ENCODE measurements at regions of chr2 and their contacts with region 1.

Region 1: DNA sequence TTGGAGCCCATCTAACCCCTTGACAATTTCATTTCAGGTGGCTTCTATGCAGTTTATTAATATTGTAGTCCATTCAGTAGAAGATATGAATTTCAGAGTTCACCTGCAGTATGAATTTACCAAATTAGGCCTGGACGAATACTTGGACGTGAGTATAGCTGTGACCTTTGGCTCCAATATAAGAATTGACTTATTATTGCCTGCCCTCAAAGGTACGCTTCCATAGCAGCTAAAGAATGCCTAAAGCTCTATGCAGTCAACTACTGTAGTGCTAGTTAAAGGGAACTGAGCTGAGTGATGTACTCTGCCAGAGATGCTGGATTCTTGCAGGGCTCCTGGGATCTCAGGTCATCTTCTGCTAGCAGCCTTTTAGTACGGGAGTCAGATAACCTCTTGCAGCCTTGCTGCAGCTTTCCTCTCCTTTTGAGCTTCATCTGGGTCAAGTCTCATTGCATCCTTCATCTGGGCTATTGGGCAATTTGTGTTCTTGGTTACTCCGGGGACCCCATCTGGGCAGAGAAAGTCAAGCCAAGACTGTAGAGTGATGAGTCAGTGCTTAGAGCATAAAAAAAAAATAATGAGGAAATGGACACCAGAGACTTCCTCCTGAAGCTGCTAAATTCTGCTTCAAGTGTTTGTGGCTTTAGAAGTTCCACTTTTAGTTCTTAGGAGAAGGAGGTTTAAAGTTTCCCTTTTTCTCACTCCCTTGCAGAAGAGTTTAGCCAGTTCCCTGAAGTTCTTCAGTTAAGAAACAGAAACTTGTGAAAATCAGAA is 105.6 kb downstream of the PRPF40A start:
- DNase-seq: peak; percentile 64
- ATAC-seq: peak; percentile 88
- H3K4me3 ChIP-seq: peak overlapping the region; percentile 49; the same call in 1 of the 2 replicates
- H3K27ac ChIP-seq: peak overlapping the region; percentile 64
- H3K4me1 ChIP-seq: peaks cover 20% of the 10 kb centered on the region
- H3K27me3 ChIP-seq: no peaks in the 10 kb centered on the region
- CTCF ChIP-seq: no peak
- EP300 ChIP-seq: peak in 1 of 2 experiments; percentile 71; a peak in 2 of 4 replicates
- POLR2A ChIP-seq: no peak
- RAD21 ChIP-seq: no peak

Region 2: DNA sequence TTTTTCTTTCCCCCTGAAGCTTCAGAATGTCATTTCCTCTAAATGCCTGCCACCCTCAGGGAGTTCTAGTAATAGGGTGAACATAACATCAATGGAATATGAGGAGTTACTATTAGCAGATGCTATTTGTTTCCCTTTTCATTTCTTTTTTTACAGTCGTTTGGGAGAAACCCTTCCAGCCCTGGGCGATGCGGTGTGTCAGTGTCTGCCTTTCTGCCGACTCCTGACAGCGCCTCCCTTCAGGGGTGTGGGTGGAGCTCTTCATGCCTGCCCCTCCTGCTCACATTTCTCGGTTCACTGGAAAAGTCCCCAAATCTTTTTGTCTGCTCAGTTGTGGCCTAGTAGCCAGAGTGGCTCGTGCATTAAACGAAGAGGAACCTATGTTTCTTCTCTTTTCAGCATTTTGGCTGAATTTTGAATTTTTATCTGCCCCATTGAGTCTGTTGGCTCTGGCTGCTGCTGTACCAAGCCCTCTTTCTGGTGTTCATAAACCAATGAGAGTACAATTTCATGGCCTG is 204.4 kb before region 1 on chr2:
- CTCF ChIA-PET with region 1: interaction called, 4 read pairs
- POLR2A ChIA-PET with region 1: interaction called, 4 read pairs
- RAD21 ChIA-PET with region 1: interaction called, 8 read pairs
- SMC1A ChIA-PET with region 1: interaction called, 21 read pairs
- in situ Hi-C with region 1: no loop called
- intact Hi-C with region 1: no loop called
- DNase-seq: peak; percentile 55
- ATAC-seq: peak; percentile 95
- H3K4me3 ChIP-seq: peak overlapping the region; percentile 20; the same call in 1 of the 2 replicates
- H3K27ac ChIP-seq: peak overlapping the region; percentile 77
- H3K4me1 ChIP-seq: peaks cover 18% of the 10 kb centered on the region
- H3K27me3 ChIP-seq: no peaks in the 10 kb centered on the region
- CTCF ChIP-seq: 0 out of 6 replicates have a peak, but pooled peaks of 1 of the 3 experiments have one; percentile 1
- EP300 ChIP-seq: 0 out of 4 replicates have a peak, but pooled peaks of 1 of the 2 experiments have one; percentile 32
- POLR2A ChIP-seq: peak; percentile 50; the same call in 1 of the 2 replicates
- RAD21 ChIP-seq: no peak

Region 3: GRCh38 chr2:152505495-152505906 is 106.1 kb before region 1 on chr2:
- CTCF ChIA-PET with region 1: no interaction called
- POLR2A ChIA-PET with region 1: interaction called, 3 read pairs
- RAD21 ChIA-PET with region 1: interaction called, 6 read pairs
- SMC1A ChIA-PET with region 1: interaction called, 14 read pairs
- in situ Hi-C with region 1: no loop called
- intact Hi-C with region 1: loop called (anchors 5 kb)
- DNase-seq: peak; percentile 35
- ATAC-seq: peak; percentile 89
- H3K4me3 ChIP-seq: no peak overlapping the region
- H3K27ac ChIP-seq: peak overlapping the region; percentile 29; the same call in 1 of the 2 replicates
- H3K4me1 ChIP-seq: peaks cover 11% of the 10 kb centered on the region; the same call in 1 of the 2 replicates
- H3K27me3 ChIP-seq: no peaks in the 10 kb centered on the region; a peak in 1 of 4 replicates
- CTCF ChIP-seq: no peak
- EP300 ChIP-seq: peak in 1 of 2 experiments; percentile 46; a peak in 1 of 4 replicates
- POLR2A ChIP-seq: no peak
- RAD21 ChIP-seq: no peak

Region 4: DNA sequence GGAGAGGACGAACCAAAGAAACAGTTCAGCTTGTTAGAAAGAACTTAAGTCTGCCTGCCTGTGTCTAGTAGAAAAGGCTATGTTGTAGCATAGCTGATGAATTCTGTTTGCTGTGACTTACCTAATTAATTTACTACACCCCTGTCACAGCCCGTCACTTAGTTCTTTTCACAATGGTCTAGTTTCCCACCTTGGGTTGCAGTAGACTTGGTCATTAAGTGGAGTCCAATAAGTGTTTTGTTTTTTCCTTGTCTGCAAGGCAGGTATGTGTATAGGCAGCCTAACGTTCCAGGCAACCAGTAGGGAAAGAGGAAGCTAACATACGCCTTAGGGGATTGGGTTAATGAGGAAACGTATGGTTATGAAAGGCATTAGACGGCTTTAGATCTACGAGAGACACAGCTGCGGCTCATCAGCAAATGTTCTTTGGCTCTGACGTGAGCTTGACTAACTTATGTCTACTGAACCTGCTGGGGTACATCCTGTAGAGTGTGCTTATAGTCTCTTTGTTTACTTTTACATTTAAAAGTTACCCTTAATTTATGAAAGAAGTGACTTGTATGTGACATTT is 74.5 kb before region 1 on chr2:
- CTCF ChIA-PET with region 1: no interaction called
- POLR2A ChIA-PET with region 1: no interaction called
- RAD21 ChIA-PET with region 1: no interaction called
- SMC1A ChIA-PET with region 1: no interaction called
- in situ Hi-C with region 1: no loop called
- intact Hi-C with region 1: no loop called
- DNase-seq: no peak
- ATAC-seq: no peak
- H3K4me3 ChIP-seq: no peak overlapping the region
- H3K27ac ChIP-seq: no peak overlapping the region
- H3K4me1 ChIP-seq: no peaks in the 10 kb centered on the region
- H3K27me3 ChIP-seq: no peaks in the 10 kb centered on the region
- CTCF ChIP-seq: no peak
- EP300 ChIP-seq: no peak
- POLR2A ChIP-seq: no peak
- RAD21 ChIP-seq: no peak

Region 5: GRCh38 chr2:152566728-152567069 is 44.9 kb before region 1 on chr2:
- CTCF ChIA-PET with region 1: interaction called, 7 read pairs
- POLR2A ChIA-PET with region 1: interaction called, 9 read pairs
- RAD21 ChIA-PET with region 1: interaction called, 25 read pairs
- SMC1A ChIA-PET with region 1: interaction called, 30 read pairs
- in situ Hi-C with region 1: no loop called
- intact Hi-C with region 1: loop called (anchors 2 kb)
- DNase-seq: peak; percentile 64
- ATAC-seq: peak; percentile 54
- H3K4me3 ChIP-seq: no peak overlapping the region
- H3K27ac ChIP-seq: peak overlapping the region; percentile 65
- H3K4me1 ChIP-seq: peaks cover 28% of the 10 kb centered on the region
- H3K27me3 ChIP-seq: no peaks in the 10 kb centered on the region
- CTCF ChIP-seq: no peak
- EP300 ChIP-seq: 0 out of 4 replicates have a peak, but pooled peaks of 1 of the 2 experiments have one; percentile 45
- POLR2A ChIP-seq: no peak
- RAD21 ChIP-seq: no peak

Region 6: GRCh38 chr2:152627351-152627957 is 15.8 kb after region 1 on chr2:
- CTCF ChIA-PET with region 1: interaction called, 25 read pairs
- POLR2A ChIA-PET with region 1: no interaction called
- RAD21 ChIA-PET with region 1: no interaction called
- SMC1A ChIA-PET with region 1: interaction called, 12 read pairs
- in situ Hi-C with region 1: no loop called
- intact Hi-C with region 1: no loop called
- DNase-seq: no peak
- ATAC-seq: peak; percentile 74
- H3K4me3 ChIP-seq: no peak overlapping the region
- H3K27ac ChIP-seq: no peak overlapping the region
- H3K4me1 ChIP-seq: no peaks in the 10 kb centered on the region
- H3K27me3 ChIP-seq: no peaks in the 10 kb centered on the region
- CTCF ChIP-seq: peak; percentile 39 to 66 (median 42); a peak in 5 of 6 replicates
- EP300 ChIP-seq: no peak
- POLR2A ChIP-seq: no peak
- RAD21 ChIP-seq: peak; percentile 85